AG04449 (cell line): ENCODE measurements at regions of chr2 and their contacts with region 1.

Region 1: GRCh38 chr2:134375935-134376334 is 122.1 kb downstream of the MGAT5 start:
- DNase-seq: no peak
- H3K4me3 ChIP-seq: no peak overlapping the region
- CTCF ChIP-seq: peak; percentile 70

Region 2: DNA sequence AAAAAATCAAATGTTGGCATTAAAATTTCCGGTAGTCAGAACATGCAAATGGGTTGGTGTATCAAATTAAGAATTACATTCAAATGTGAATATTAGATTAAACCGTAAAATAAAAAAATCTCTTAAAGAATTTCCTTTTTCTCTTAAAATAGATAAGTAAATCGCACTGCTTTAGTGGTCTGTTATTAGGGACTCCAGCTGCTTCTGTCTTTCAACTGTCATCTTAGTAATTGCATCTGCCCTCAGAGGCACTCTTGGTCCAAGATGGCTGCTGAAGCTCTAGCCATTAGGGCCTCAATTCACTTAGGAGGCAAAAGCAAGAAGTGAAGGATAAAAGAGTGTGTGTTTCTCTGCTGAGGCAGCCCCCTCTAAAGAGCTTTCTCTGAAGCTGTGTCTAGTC is 10.4 kb after region 1 on chr2:
- CTCF ChIA-PET with region 1: interaction called, 16 read pairs
- POLR2A ChIA-PET with region 1: no interaction called
- DNase-seq: no peak
- H3K4me3 ChIP-seq: no peak overlapping the region
- CTCF ChIP-seq: no peak